Common myeloid progenitor, CD34-positive (primary cell): ENCODE measurements at regions of chr20 and their contacts with region 1.

Region 1: GRCh38 chr20:60057123-60057801 is 99.0 kb downstream of the CDH26 start:
- DNase-seq: peak; percentile 83 to 91 (median 91)
- H3K4me3 ChIP-seq: peak overlapping the region in 2 of 7 experiments; percentile 43 to 80
- H3K27ac ChIP-seq: peak overlapping the region; percentile 73 to 82
- H3K4me1 ChIP-seq: peaks cover 18 to 87% (median 58%) of the 10 kb centered on the region in 4 experiments
- H3K27me3 ChIP-seq: no peaks in the 10 kb centered on the region

Region 2: DNA sequence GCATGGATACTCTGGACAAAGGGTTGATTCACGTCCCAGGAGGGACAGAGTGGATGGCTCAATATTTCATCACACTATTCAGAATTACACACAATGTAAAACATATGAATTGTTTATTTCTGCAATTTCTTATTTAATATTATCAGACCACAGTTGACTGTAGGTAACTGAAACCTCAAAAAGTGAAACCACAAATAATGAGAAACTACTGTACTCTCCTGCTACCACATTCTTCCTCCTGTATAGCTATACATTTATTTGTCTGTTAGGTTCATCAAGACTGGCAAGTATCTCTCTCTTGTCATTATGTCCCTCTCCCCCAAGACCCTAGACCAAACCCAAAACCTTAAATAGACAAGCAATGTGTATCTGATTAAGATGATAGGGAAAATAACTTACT is 183.9 kb before region 1 on chr20:
- CTCF ChIA-PET with region 1: no interaction called
- POLR2A ChIA-PET with region 1: no interaction called
- DNase-seq: no peak
- H3K4me3 ChIP-seq: no peak overlapping the region
- H3K27ac ChIP-seq: no peak overlapping the region
- H3K4me1 ChIP-seq: no peaks in the 10 kb centered on the region
- H3K27me3 ChIP-seq: no peaks in the 10 kb centered on the region

Region 3: GRCh38 chr20:59955132-59955796 is 102.0 kb before region 1 on chr20:
- CTCF ChIA-PET with region 1: interaction called, 17 read pairs
- POLR2A ChIA-PET with region 1: no interaction called
- DNase-seq: peak in 2 of 3 donors; percentile 58 to 66
- H3K4me3 ChIP-seq: no peak overlapping the region
- H3K27ac ChIP-seq: no peak overlapping the region
- H3K4me1 ChIP-seq: no peaks in the 10 kb centered on the region
- H3K27me3 ChIP-seq: no peaks in the 10 kb centered on the region

Region 4: GRCh38 chr20:60034231-60035110 is 22.8 kb before region 1 on chr20:
- CTCF ChIA-PET with region 1: no interaction called
- POLR2A ChIA-PET with region 1: no interaction called
- DNase-seq: no peak
- H3K4me3 ChIP-seq: no peak overlapping the region
- H3K27ac ChIP-seq: no peak overlapping the region
- H3K4me1 ChIP-seq: no peaks in the 10 kb centered on the region
- H3K27me3 ChIP-seq: no peaks in the 10 kb centered on the region

Region 5: DNA sequence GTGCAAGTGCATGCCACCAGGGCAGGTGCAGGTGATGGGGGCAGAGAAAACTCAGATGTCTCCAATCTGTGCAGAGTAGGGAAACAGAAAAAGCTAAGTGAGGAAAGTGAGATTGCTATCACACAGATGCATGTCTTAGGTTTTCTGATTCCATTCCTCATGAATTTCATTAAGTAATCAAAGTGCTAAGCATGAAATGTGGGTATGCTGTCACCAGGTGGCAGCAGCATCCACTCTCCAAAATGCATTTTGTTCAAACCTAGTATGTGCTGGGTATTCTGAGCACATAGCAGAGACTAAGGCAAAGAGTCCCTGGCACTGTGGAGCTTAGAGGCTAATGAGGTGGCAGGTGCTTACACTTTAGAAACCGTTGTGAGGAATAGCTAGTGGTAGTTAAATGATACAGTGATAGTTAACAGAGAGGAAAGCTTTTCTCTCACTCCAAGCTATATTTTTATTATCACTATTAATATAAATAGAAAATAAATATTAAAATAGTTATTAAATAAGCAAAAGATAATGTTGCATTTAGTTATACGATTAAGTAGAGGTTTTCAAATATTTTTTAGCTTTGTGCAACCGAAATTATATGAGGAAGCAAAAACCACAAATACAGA is 80.5 kb after region 1 on chr20:
- CTCF ChIA-PET with region 1: interaction called, 30 read pairs
- POLR2A ChIA-PET with region 1: no interaction called
- DNase-seq: peak; percentile 31 to 70 (median 69)
- H3K4me3 ChIP-seq: peak overlapping the region in 2 of 7 experiments; percentile 24 to 37
- H3K27ac ChIP-seq: no peak overlapping the region
- H3K4me1 ChIP-seq: peaks cover 21 to 44% (median 38%) of the 10 kb centered on the region in 4 experiments
- H3K27me3 ChIP-seq: no peaks in the 10 kb centered on the region

Region 6: GRCh38 chr20:60210779-60211617 is 153.7 kb after region 1 on chr20:
- CTCF ChIA-PET with region 1: interaction called, 58 read pairs
- POLR2A ChIA-PET with region 1: interaction called, 5 read pairs
- DNase-seq: peak; percentile 75 to 80 (median 77)
- H3K4me3 ChIP-seq: peak overlapping the region in 1 of 7 experiments; percentile 46
- H3K27ac ChIP-seq: no peak overlapping the region
- H3K4me1 ChIP-seq: peaks cover 9 to 50% (median 15%) of the 10 kb centered on the region in 4 experiments
- H3K27me3 ChIP-seq: no peaks in the 10 kb centered on the region

Region 7: GRCh38 chr20:61263084-61263695 is 1205.9 kb after region 1 on chr20:
- CTCF ChIA-PET with region 1: interaction called, 14 read pairs
- POLR2A ChIA-PET with region 1: no interaction called
- DNase-seq: peak in 2 of 3 donors; percentile 33 to 49
- H3K4me3 ChIP-seq: no peak overlapping the region
- H3K27ac ChIP-seq: no peak overlapping the region
- H3K4me1 ChIP-seq: no peaks in the 10 kb centered on the region
- H3K27me3 ChIP-seq: peaks cover 0 to 6% (median 0%) of the 10 kb centered on the region in 5 experiments